ENCODE measurements at regions of chr2 and their contacts with region 1.

Region 1: GRCh38 chr2:97995734-97996624 is at the start of gene TMEM131:
- DNase-seq: peak; percentile 95 to 98 (median 96)
- ATAC-seq: peak; percentile 92 to 98 (median 97)
- H3K4me3 ChIP-seq: peak within 1 kb of the TSS; percentile 75 to 97 (median 86)
- H3K27ac ChIP-seq: peak within 1 kb of the TSS; percentile 90 to 98 (median 97)
- H3K4me1 ChIP-seq: peaks cover 3 to 45% (median 31%) of the 10 kb centered on the region in 12 donors
- H3K27me3 ChIP-seq: no peaks in the 10 kb centered on the region
- CTCF ChIP-seq: no peak
- POLR2A ChIP-seq: peak in 1 of 2 donors; percentile 62
- total RNA-seq, gene TMEM131: 23.7 to 38.3 (median 31.3) TPM

Region 2: GRCh38 chr2:97868986-97869721 is 126.8 kb before region 1 on chr2:
- intact Hi-C with region 1: loop called in 4 of 10 experiments (anchors 5 to 10 kb)
- DNase-seq: peak; percentile 33 to 81 (median 63)
- ATAC-seq: peak; percentile 92 to 96 (median 94)
- H3K4me3 ChIP-seq: no peak overlapping the region
- H3K27ac ChIP-seq: peak overlapping the region; percentile 75 to 86 (median 81)
- H3K4me1 ChIP-seq: peaks cover 0 to 56% (median 33%) of the 10 kb centered on the region in 12 donors
- H3K27me3 ChIP-seq: no peaks in the 10 kb centered on the region
- CTCF ChIP-seq: no peak
- POLR2A ChIP-seq: peak in 1 of 2 donors; percentile 39

Region 3: DNA sequence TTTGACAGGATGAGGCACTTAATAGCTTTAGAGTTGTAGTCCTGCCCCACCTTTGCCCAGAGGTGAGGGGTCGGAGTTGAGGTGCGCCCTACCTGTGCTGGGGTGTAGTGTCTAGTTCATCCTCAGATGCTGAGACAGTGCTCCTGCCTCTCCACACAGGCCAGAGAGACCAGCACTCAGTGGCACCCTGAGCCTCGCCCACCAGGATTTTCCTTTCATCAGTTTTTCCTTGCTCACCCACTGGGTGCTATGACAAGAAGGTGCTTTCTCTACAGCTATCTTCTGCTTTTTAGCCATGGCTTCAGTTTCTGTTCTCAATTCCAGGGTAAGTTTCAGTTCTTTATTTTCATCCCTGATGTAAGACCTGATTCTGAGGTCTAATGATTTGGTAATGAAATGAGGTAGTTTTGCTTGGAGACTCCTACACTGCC is 16.6 kb after region 1 on chr2:
- intact Hi-C with region 1: no loop called
- DNase-seq: no peak
- ATAC-seq: peak in 2 of 4 donors; percentile 29 to 32
- H3K4me3 ChIP-seq: no peak overlapping the region
- H3K27ac ChIP-seq: no peak overlapping the region
- H3K4me1 ChIP-seq: peaks cover 0 to 38% (median 10%) of the 10 kb centered on the region in 12 donors
- H3K27me3 ChIP-seq: no peaks in the 10 kb centered on the region
- CTCF ChIP-seq: no peak
- POLR2A ChIP-seq: no peak

Region 4: DNA sequence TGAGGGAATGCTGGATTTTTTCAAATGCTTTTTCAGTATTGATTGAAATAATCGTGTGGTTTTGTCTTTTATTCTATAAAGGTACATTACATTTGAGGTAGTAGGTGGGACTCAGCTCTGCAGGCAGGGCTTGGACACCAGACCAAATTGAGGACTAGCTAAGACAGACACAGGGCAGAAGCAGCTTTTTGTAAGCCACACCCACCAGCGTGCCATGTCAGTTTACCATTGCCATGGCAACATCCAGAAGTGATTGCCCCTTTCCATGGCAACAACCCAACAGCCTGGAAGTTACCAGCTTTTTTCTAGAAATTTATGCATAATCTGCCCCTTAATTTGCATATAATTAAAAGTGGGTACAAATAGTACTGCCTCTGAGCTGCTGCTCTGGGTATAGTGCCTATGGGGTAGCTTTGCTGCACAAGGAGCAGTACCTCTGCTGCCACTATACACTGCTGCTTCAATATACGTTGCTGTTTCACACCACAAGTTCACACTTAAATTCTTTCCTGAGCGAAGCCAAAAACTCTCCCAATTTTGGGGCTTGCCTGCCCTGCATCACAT is 67.4 kb after region 1 on chr2:
- intact Hi-C with region 1: no loop called
- DNase-seq: no peak
- ATAC-seq: no peak
- H3K4me3 ChIP-seq: no peak overlapping the region
- H3K27ac ChIP-seq: no peak overlapping the region
- H3K4me1 ChIP-seq: no peaks in the 10 kb centered on the region
- H3K27me3 ChIP-seq: peaks cover 0 to 7% (median 0%) of the 10 kb centered on the region in 9 donors
- CTCF ChIP-seq: no peak
- POLR2A ChIP-seq: no peak

Region 5: DNA sequence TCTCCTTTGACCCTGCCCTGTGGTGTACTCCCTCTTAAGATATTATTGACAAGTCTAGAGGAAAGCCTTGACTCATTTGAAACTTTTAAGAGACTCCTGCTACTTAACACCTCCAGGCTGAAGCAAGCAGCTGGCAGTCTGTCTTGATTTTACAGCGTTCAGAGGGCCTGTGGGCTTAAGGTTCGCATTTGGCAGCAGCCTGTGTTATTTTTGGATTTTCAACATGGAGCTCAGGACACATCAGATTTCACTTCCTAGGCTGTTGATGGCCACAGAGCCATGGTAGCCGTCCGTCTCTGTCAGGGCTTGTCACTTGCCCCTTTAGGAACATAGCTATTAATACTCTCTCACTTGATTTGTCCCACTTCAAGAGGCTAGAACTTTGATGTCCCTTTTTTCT is 164.6 kb after region 1 on chr2:
- intact Hi-C with region 1: loop called in 4 of 10 experiments (anchors 2 to 10 kb)
- DNase-seq: peak in 4 of 5 donors; percentile 56 to 77 (median 66)
- ATAC-seq: peak; percentile 60 to 75 (median 66)
- H3K4me3 ChIP-seq: no peak overlapping the region
- H3K27ac ChIP-seq: peak overlapping the region; percentile 76 to 96 (median 92)
- H3K4me1 ChIP-seq: peaks cover 3 to 81% (median 50%) of the 10 kb centered on the region in 12 donors
- H3K27me3 ChIP-seq: no peaks in the 10 kb centered on the region
- CTCF ChIP-seq: no peak
- POLR2A ChIP-seq: peak in 1 of 2 donors; percentile 29

Region 6: GRCh38 chr2:98385050-98385699 is 389.2 kb after region 1 on chr2:
- intact Hi-C with region 1: loop called in 2 of 10 experiments (anchors 10 kb)
- DNase-seq: peak; percentile 55 to 82 (median 70)
- ATAC-seq: peak; percentile 60 to 90 (median 84)
- H3K4me3 ChIP-seq: no peak overlapping the region
- H3K27ac ChIP-seq: no peak overlapping the region
- H3K4me1 ChIP-seq: peaks cover 0 to 2% (median 0%) of the 10 kb centered on the region in 12 donors
- H3K27me3 ChIP-seq: no peaks in the 10 kb centered on the region
- CTCF ChIP-seq: peak; percentile 79 to 96 (median 90)
- POLR2A ChIP-seq: no peak